ENCODE measurements at regions of chr12 and their contacts with region 1.

Region 1: GRCh38 chr12:123983822-123984485 is 10.9 kb downstream of the ZNF664 start:
- DNase-seq: peak in 1 of 3 donors; percentile 63
- ATAC-seq: peak; percentile 84
- H3K4me3 ChIP-seq: no peak overlapping the region
- H3K4me1 ChIP-seq: no peaks in the 10 kb centered on the region
- CTCF ChIP-seq: peak; percentile 19

Region 2: DNA sequence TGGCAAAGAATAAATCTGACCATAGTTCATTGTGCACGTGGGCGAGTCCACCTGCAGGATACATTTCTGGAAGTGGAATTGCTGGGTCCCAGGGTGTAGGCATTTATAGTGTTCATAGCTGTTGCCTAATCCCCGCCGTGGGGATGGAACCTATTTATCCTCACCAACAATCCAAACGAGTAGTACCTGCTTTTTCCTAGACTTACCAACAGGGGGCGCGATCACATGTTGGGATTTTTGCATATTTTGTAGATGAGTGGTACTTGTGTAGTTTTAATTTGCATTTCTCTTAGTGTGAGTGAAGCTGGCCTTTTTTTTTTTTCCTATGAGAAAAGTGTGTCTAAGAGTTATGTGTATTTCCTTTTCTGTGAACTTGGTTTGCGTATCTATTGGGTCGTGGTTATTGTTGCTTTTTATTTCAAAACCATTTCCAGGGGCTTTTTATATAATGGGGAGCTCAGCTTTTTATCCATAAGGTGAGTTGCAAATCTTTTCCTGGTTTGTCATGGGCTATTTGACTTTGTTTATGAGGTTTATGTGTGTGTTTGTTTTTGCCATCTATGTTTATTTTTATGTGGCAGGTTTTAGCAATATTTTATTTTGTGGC is 78.5 kb before region 1 on chr12:
- intact Hi-C with region 1: loop called in 1 of 2 experiments (anchors 10 kb)
- DNase-seq: peak in 1 of 3 donors; percentile 69
- ATAC-seq: peak; percentile 77
- H3K4me3 ChIP-seq: no peak overlapping the region
- H3K4me1 ChIP-seq: no peaks in the 10 kb centered on the region
- CTCF ChIP-seq: peak; percentile 55